Dendritic cell treated with granulocyte-macrophage colony-stimulating factor and Interleukin-4, amounts not matched to agents 40 ng/mL and 50 ng/mL, for 4 days (primary cell): ENCODE measurements at regions of chr5 and their contacts with region 1.

Region 1: GRCh38 chr5:87267574-87268125 is at the start of gene RASA1:
- H3K4me3 Mint-ChIP-seq: peak within 1 kb of the TSS; percentile 99
- H3K27ac Mint-ChIP-seq: peak within 1 kb of the TSS; percentile 97
- H3K4me1 Mint-ChIP-seq: peaks cover 31% of the 10 kb centered on the region
- H3K27me3 Mint-ChIP-seq: no peaks in the 10 kb centered on the region

Region 2: GRCh38 chr5:86118542-86118941 is 1149.1 kb before region 1 on chr5:
- intact Hi-C with region 1: no loop called
- H3K4me3 Mint-ChIP-seq: no peak overlapping the region
- H3K27ac Mint-ChIP-seq: no peak overlapping the region
- H3K4me1 Mint-ChIP-seq: no peaks in the 10 kb centered on the region
- H3K27me3 Mint-ChIP-seq: no peaks in the 10 kb centered on the region

Region 3: GRCh38 chr5:86986837-86987236 is 280.8 kb before region 1 on chr5:
- intact Hi-C with region 1: no loop called
- H3K4me3 Mint-ChIP-seq: no peak overlapping the region
- H3K27ac Mint-ChIP-seq: no peak overlapping the region
- H3K4me1 Mint-ChIP-seq: peaks cover 4% of the 10 kb centered on the region
- H3K27me3 Mint-ChIP-seq: no peaks in the 10 kb centered on the region

Region 4: DNA sequence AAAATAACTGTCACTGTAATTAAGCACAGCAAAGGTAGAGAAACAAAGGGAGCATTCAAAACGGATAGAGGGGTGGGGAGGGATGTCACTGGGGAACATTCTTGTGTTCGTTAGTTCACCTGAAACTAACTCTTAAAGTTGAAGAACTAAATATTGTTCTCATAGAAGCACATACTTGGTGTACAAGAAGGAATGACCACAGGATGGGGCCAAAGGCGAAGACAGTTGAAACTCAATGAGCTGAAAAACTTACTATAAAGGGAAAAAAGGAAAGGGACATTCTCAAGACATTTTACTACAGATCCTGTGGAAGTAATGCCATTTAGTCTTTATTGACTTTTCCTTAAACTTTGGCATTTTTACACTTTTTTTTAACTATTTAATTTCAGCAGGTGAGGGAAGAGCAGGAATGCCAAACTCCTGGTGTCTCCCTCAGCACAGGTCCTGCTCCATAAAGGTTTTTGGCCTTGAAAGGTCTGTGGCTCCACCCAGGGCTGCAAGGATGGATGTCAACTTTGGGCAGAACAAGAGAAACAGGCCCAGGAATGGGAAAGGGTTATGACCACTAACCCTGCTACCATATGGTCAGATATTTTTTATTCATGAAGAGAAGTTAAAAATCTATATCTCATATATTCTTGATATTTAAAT is 197.6 kb before region 1 on chr5:
- intact Hi-C with region 1: loop called (anchors 5 kb)
- H3K4me3 Mint-ChIP-seq: no peak overlapping the region
- H3K27ac Mint-ChIP-seq: no peak overlapping the region
- H3K4me1 Mint-ChIP-seq: peaks cover 5% of the 10 kb centered on the region
- H3K27me3 Mint-ChIP-seq: no peaks in the 10 kb centered on the region

Region 5: GRCh38 chr5:87298692-87299362 is 31.2 kb after region 1 on chr5:
- intact Hi-C with region 1: loop called (anchors 1 kb)
- H3K4me3 Mint-ChIP-seq: no peak overlapping the region
- H3K27ac Mint-ChIP-seq: peak overlapping the region; percentile 86
- H3K4me1 Mint-ChIP-seq: peaks cover 58% of the 10 kb centered on the region
- H3K27me3 Mint-ChIP-seq: no peaks in the 10 kb centered on the region